Activated CD8-positive, alpha-beta T cell treated with anti-CD3 and anti-CD28 coated beads, Interleukin-2, amount 10 ng/mL, durations not matched to agents 7 days and 5 days (primary cell): ENCODE measurements at regions of chr4 and their contacts with region 1.

Region 1: DNA sequence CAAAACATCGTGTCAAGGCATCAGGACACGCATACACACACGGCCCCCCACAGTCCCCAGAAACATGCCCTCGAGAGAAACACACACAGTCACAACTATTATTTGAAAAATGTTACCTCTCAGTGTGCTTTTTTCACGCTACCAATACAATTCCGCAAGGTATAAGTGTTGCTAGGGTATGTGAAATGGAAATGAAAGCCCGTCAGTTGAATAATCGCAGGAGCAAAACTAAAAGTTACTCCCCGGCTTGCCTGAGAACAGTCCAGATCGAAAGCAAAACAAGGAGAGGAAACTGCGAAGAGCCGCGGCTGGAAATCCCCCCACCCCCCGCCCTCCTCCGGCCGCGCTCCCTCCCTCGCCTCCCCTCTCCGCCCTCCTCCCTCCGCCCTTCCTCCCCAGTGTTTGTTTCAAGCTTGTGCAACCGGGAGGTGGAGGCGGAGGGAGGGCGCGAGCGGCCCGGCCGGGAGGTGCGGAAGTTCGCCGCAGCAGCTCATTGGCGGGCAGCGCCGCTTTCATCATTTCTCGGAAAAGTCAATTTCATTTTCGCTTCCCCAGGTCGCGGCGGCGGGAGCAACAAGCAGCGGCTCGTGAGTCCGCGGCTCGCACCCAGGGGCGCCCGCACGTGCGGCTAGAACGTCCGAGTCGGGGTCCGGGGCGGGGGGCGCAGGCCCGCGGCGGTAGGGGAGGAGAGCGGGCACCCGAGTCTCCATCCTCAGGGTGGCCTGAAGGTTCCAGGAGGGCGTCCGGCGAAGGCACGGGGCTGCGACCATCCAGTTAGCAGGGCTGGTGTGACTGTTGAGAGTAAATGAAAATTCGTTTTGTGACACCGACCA is at the start of gene IRF2:
- DNase-seq: peak; percentile 99
- ATAC-seq: peak; percentile 75
- H3K4me3 Mint-ChIP-seq: peak within 1 kb of the TSS; percentile 99
- H3K27ac Mint-ChIP-seq: peak within 1 kb of the TSS; percentile 99
- H3K4me1 Mint-ChIP-seq: peaks cover 57% of the 10 kb centered on the region
- H3K27me3 Mint-ChIP-seq: no peaks in the 10 kb centered on the region
- total RNA-seq, gene IRF2: 59.7 to 65.3 TPM

Region 2: GRCh38 chr4:184287697-184288255 is 186.7 kb before region 1 on chr4:
- CTCF ChIA-PET with region 1: interaction called, 9 read pairs
- POLR2A ChIA-PET with region 1: interaction called, 28 read pairs
- DNase-seq: peak; percentile 23
- ATAC-seq: no peak
- H3K4me3 Mint-ChIP-seq: peak overlapping the region; percentile 11
- H3K27ac Mint-ChIP-seq: peak overlapping the region; percentile 14
- H3K4me1 Mint-ChIP-seq: peaks cover 36% of the 10 kb centered on the region
- H3K27me3 Mint-ChIP-seq: no peaks in the 10 kb centered on the region

Region 3: GRCh38 chr4:184328022-184328736 is 146.3 kb before region 1 on chr4:
- CTCF ChIA-PET with region 1: no interaction called
- POLR2A ChIA-PET with region 1: no interaction called
- DNase-seq: no peak
- ATAC-seq: peak; percentile 42
- H3K4me3 Mint-ChIP-seq: no peak overlapping the region
- H3K27ac Mint-ChIP-seq: no peak overlapping the region
- H3K4me1 Mint-ChIP-seq: peaks cover 34% of the 10 kb centered on the region
- H3K27me3 Mint-ChIP-seq: no peaks in the 10 kb centered on the region

Region 4: DNA sequence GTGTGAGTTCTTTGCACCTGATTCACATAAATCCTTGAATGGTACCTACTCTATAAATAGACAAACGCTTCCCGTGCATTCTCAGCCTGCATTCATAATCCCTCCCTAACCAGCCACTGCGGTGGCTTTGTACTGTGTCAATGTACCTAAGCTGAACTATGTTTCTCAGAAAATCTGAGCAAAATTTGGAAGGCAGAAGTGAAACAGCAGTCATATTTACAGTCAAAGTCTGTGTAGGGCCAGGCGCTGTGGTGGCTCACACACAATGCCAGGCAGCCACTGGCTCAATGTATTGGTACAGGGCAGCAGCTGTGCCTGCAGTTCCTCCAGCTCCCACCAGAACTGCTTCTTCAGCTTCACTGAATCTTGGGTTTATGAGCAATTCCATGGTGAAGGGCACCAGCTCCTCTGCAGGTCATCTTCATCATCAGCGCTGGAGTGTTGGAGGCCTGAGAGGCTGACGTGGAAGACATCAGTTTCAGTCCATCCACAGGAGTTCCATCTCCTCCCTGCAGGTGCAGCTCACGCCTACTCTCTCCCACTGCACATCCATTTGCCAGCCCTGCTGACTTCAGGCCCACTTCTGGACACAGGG is 32.1 kb after region 1 on chr4:
- CTCF ChIA-PET with region 1: interaction called, 3 read pairs
- POLR2A ChIA-PET with region 1: interaction called, 34 read pairs
- DNase-seq: peak; percentile 59
- ATAC-seq: peak; percentile 82
- H3K4me3 Mint-ChIP-seq: no peak overlapping the region
- H3K27ac Mint-ChIP-seq: peak overlapping the region; percentile 22
- H3K4me1 Mint-ChIP-seq: peaks cover 33% of the 10 kb centered on the region
- H3K27me3 Mint-ChIP-seq: no peaks in the 10 kb centered on the region

Region 5: DNA sequence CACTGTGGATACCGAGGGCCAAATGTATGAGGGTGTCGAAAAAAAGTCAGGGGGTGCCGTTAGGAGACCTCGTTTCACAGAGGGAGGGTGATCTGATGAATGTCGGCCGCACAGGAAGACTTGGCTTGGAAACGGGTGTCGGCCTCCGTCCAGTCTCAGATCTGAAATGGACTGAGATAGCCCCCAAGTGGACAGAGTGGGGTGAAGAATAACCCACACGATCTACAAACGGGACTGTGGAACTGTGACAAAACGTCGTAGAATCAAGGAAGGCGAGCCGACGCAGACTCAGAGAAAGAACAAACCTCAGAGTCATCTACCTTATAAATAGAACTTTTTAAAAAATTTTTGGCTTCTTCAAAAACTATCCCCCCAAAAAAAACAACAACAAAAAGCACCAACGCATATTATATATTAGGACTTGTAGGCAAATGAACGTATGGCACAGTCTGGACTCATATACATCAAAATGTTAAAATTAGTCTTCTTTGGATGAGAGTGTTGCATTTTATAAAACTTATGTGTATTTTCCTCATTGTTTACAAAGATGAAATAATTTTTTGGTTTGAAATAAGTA is 63.6 kb after region 1 on chr4:
- CTCF ChIA-PET with region 1: interaction called, 14 read pairs
- POLR2A ChIA-PET with region 1: interaction called, 129 read pairs
- DNase-seq: peak; percentile 79
- ATAC-seq: peak; percentile 54
- H3K4me3 Mint-ChIP-seq: peak overlapping the region; percentile 95
- H3K27ac Mint-ChIP-seq: peak overlapping the region; percentile 96
- H3K4me1 Mint-ChIP-seq: peaks cover 39% of the 10 kb centered on the region
- H3K27me3 Mint-ChIP-seq: no peaks in the 10 kb centered on the region